HEK293 (cell line): ENCODE measurements at regions of chr22 and their contacts with region 1.

Region 1: DNA sequence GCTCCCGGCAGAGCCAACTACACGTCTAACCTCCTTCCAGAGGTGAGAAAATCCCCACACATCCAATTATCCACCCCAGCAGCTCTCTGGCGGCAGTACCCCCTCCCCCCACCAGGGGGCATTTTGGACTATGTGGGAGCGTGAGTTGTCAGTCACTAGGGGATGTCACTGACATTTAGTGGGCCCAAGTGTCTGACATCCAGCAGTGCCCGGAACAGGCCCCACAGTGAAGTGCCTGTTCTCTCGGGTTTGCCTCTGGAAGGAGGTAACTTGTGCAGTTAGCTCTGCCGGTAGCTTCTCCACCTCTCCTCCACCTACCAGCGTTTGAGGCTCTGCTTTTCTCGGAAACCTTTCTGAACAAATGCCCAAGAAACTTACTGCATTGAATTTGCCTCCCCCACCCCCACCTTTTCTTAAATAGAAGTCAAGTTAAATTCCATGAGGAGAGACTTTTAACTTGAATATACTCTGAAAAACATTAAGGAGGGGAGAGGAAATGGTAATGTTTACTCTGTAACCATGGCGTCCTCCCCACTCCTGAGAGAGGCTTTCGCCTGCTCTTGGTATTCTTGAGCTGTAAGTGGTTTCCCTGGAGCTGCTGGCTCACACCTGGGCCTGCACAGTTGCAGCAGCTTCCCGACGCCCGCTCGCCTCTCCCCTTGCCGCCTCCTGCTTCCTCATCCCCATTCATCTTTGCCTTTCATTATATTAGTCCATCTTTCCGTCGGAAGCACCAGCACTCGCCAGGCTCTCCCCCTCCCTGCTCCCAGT is 112.8 kb downstream of the WNT7B start:
- H3K4me3 ChIP-seq: no peak overlapping the region
- H3K27ac ChIP-seq: no peak overlapping the region
- H3K4me1 ChIP-seq: no peaks in the 10 kb centered on the region
- CTCF ChIP-seq: peak; percentile 83

Region 2: DNA sequence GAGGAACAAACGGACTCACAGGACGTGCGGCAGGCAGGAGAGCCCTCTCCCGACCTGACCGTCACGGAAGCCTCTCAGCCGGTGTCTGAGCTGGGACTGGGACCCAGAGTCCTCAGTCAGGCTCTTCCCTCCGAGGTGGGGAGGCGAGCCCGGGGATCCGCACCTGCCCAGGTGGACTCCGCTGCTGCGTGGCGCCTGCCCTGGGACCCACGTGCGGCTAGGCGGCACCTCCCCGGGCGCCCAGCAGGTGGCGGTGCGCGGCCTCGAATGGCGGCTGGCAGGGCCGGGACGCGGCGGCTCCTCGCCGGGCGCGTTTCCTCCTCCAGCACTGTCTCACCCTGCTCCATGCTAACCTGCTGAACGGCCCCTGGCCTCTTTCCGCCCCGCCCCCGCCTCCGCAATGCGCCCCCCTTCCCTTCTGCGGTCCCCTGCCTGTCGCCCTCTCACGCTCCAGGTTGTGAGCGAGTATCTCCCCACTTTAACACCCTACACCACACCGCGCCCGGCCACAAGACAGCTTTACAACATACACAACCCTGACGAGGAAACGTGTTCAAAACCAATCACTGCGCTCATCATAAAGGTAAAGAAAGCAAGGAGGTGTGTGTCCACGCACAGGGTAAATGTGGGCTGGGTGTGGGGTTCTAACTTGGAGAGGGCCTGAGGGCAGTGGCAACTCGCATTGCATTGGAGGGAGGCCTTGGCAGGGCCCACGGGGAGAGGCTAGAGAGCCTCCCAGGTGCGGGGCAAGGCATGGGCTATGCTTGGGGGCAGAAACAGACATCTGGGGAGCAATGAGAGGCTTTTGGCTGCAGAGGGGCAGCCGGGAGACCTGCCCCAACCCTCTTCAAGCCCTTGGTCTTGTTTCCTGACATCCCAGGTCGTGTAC is 218.4 kb before region 1 on chr22:
- CTCF ChIA-PET with region 1: interaction called, 12 read pairs
- POLR2A ChIA-PET with region 1: no interaction called
- H3K4me3 ChIP-seq: no peak overlapping the region
- H3K27ac ChIP-seq: no peak overlapping the region
- H3K4me1 ChIP-seq: no peaks in the 10 kb centered on the region
- CTCF ChIP-seq: peak; percentile 84

Region 3: DNA sequence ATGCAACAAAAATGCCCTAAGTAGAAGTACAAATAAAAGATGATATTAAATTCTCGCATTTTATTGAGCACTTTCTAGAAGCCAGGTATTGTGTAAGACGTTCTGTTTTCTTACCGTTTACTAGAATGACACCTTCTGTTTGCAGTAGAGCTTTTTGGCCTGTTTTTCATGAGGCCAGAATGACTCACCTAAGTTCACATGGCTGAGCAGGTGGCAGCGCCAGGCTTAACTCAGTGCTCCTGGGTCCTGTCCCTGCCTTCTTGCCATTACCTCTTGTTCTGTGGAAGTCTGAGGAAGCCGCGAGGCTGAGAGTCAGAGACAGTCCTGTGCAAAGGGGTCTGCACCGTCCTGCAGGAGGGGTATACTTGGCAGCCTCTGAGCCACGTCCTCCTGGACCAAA is 78.7 kb before region 1 on chr22:
- CTCF ChIA-PET with region 1: no interaction called
- POLR2A ChIA-PET with region 1: no interaction called
- H3K4me3 ChIP-seq: no peak overlapping the region
- H3K27ac ChIP-seq: no peak overlapping the region
- H3K4me1 ChIP-seq: 0 out of 2 replicates have a peak, but pooled peaks cover 5% of the 10 kb centered on the region
- CTCF ChIP-seq: no peak

Region 4: DNA sequence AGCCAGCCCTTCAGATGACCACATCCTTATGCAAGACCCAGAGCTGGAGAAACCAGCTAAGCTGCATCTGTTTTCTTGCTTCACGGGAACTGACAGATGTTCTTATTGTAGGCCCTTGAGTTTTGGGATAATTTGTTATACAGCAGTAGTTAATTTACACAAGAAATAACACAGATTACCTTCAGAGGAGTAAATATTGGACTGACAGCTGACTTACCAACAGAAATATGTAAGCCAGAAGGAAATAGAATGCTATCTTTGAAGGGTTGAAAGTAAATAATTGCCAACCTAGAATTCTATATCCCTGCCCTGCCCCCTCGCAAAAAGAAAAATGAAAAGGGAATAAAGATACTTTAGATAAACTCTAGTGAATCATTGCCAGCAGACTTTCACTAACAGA is 11.3 kb before region 1 on chr22:
- CTCF ChIA-PET with region 1: interaction called, 29 read pairs
- POLR2A ChIA-PET with region 1: no interaction called
- H3K4me3 ChIP-seq: no peak overlapping the region
- H3K27ac ChIP-seq: no peak overlapping the region
- H3K4me1 ChIP-seq: no peaks in the 10 kb centered on the region
- CTCF ChIP-seq: no peak

Region 5: DNA sequence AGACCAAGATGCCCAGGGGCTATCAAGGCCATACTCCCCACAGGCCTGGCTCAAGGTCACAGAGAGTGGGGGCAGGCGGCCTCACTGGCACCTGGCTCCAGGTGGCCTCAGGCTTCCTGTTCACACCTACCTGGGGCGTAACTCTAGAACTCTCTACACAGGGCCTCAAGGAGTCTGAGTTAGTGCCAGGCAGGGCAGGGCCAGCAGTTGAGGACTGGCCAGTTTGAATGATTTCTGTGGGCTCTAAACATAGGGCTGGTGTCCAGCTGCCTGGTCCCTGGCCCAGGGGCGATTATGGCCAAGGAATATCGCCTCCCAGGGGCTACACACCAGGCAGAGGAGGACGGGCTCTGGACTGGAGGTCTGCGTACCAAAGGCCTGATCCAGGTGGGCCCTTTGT is 33.6 kb after region 1 on chr22:
- CTCF ChIA-PET with region 1: interaction called, 10 read pairs
- POLR2A ChIA-PET with region 1: no interaction called
- H3K4me3 ChIP-seq: no peak overlapping the region
- H3K27ac ChIP-seq: no peak overlapping the region
- H3K4me1 ChIP-seq: no peaks in the 10 kb centered on the region
- CTCF ChIP-seq: no peak

Region 6: GRCh38 chr22:45918459-45919370 is 54.5 kb after region 1 on chr22:
- CTCF ChIA-PET with region 1: no interaction called
- POLR2A ChIA-PET with region 1: no interaction called
- H3K4me3 ChIP-seq: no peak overlapping the region
- H3K27ac ChIP-seq: no peak overlapping the region
- H3K4me1 ChIP-seq: no peaks in the 10 kb centered on the region
- CTCF ChIP-seq: no peak

Region 7: DNA sequence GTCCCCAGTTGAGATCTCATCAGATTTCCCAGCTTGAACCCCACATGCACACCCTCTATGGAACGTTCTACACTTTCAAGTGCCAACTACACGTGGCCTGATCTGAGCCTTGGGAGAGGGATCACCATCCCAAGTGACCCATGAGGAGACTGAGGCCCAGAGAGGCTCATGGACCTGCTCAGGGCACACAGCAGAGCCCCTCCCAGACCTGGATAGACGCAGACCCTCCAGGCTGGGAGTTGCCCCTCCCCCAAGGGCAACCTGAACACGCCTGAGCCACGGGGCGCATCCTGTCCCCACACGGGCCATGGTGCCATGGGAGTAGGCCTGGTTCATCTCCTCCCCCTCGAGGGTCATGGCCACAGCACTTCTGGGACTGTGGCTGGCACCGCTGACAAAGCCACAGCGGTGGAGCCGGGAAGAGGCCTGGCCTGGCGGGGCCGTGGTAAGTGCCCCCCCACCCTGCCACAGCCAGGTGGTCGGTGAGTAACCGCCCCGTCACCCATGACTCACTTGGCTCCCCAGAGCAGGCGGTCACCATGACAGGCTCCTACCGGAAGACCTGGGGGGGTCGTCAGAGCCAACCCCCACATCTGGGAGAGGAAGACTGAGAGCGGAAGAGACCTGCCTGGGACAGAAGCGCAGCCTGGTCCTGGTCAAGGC is 104.7 kb after region 1 on chr22:
- CTCF ChIA-PET with region 1: interaction called, 12 read pairs
- POLR2A ChIA-PET with region 1: no interaction called
- H3K4me3 ChIP-seq: no peak overlapping the region
- H3K27ac ChIP-seq: no peak overlapping the region
- H3K4me1 ChIP-seq: no peaks in the 10 kb centered on the region
- CTCF ChIP-seq: no peak

Region 8: DNA sequence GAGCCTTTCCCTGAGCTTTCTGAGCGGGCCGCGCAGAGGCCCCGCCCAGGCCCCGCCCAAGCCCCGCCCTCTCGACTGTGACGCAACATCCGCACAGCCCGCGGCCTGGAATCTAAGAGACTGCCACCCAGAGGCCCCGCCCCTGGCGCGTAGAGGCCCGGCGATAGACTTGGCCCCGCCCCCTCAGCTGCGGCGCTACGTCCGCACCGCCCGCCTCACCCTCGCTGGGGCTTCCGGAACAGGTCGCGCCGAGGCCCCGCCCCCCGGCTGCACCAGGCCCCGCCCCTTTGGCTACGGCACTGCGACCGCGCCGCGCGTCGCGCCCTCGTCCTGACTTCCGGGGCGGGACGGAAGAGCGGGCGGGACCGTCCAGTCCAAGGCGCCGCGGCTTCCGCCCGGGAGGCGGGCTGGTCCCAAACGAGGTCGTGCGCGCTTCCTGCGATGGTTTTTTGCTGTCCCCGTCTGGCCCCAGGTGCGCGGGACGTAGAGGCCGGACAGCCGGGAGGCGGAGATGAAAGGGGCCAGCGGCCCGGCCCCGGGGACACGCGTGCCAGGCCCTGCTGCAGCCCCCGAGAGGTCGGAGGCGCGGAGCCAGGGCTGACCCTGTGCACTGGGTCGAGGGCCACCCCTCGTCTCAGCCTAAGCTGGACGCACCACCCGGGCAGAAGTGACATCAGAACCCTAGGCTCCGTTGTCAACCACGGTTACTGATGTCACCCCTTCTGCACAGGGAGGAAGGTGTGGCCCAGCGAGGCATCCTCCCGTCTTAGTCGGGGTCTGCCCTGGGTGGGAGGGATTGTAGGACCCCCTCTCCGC is 171.8 kb after region 1 on chr22:
- CTCF ChIA-PET with region 1: no interaction called
- POLR2A ChIA-PET with region 1: no interaction called
- H3K4me3 ChIP-seq: peak overlapping the region; percentile 83
- H3K27ac ChIP-seq: peak overlapping the region; percentile 80
- H3K4me1 ChIP-seq: peaks cover 5% of the 10 kb centered on the region
- CTCF ChIP-seq: no peak